HEK293 (cell line): ENCODE measurements at regions of chr16 and their contacts with region 1.

Region 1: GRCh38 chr16:13863075-13863765 is 56.7 kb upstream of the ERCC4 start:
- H3K4me3 ChIP-seq: no peak overlapping the region
- H3K27ac ChIP-seq: no peak overlapping the region
- H3K4me1 ChIP-seq: no peaks in the 10 kb centered on the region
- CTCF ChIP-seq: no peak

Region 2: GRCh38 chr16:13873835-13874438 is 10.7 kb after region 1 on chr16:
- CTCF ChIA-PET with region 1: interaction called, 15 read pairs
- POLR2A ChIA-PET with region 1: no interaction called
- H3K4me3 ChIP-seq: no peak overlapping the region
- H3K27ac ChIP-seq: no peak overlapping the region
- H3K4me1 ChIP-seq: no peaks in the 10 kb centered on the region
- CTCF ChIP-seq: peak; percentile 42; the same call in 1 of the 2 replicates